MCF 10A (cell line): ENCODE measurements at regions of chr1 and their contacts with region 1.

Region 1: GRCh38 chr1:26450908-26451307 is 18.8 kb downstream of the DHDDS start:
- DNase-seq: no peak
- H3K4me3 Mint-ChIP-seq: no peak overlapping the region
- H3K27ac Mint-ChIP-seq: no peak overlapping the region
- H3K4me1 Mint-ChIP-seq: no peaks in the 10 kb centered on the region
- H3K27me3 Mint-ChIP-seq: no peaks in the 10 kb centered on the region
- CTCF ChIP-seq: no peak

Region 2: GRCh38 chr1:26259578-26259977 is 191.3 kb before region 1 on chr1:
- CTCF ChIA-PET with region 1: no interaction called
- POLR2A ChIA-PET with region 1: no interaction called
- intact Hi-C with region 1: no loop called
- DNase-seq: no peak
- H3K4me3 Mint-ChIP-seq: no peak overlapping the region
- H3K27ac Mint-ChIP-seq: no peak overlapping the region
- H3K4me1 Mint-ChIP-seq: no peaks in the 10 kb centered on the region
- H3K27me3 Mint-ChIP-seq: no peaks in the 10 kb centered on the region
- CTCF ChIP-seq: no peak

Region 3: DNA sequence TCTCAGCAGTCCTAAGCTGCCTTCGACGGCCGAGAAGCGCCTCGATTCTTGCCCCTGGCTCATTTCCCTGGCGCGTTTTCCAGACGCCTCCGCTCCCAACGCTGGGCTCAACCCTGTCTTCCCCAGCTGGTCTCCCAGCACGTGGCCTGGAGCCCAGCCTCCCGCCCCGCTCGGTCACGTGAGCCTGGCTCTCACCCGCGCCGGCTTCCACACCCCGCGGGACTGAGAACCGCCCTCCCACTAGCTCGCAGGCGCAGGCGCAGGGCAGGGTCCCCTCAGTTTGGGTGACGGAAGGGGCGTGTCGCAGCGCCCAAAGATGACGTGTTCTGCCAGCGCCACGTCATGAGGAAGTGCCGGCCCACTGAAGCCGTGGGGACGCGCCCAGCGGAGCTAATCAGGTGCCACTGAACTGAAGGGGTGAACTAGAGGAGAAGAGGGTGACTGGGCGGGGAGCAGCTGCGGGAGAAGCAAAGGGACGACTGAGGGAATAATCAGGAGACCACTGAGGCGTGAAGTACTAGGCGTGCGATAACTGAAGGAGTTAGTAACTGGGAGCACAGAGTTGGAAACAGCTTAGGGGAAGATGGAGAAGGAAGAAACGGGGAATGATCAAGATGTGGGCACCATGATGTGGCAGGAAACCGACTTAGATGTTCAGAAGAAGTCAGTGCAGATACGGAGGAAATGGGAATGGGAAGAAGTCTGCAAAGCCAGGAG is 18.8 kb before region 1 on chr1 and contains the start of gene DHDDS:
- CTCF ChIA-PET with region 1: interaction called, 7 read pairs
- POLR2A ChIA-PET with region 1: interaction called, 11 read pairs
- intact Hi-C with region 1: no loop called
- DNase-seq: peak; percentile 97
- H3K4me3 Mint-ChIP-seq: peak within 1 kb of the TSS; percentile 94
- H3K27ac Mint-ChIP-seq: peak within 1 kb of the TSS; percentile 88
- H3K4me1 Mint-ChIP-seq: peaks cover 12% of the 10 kb centered on the region
- H3K27me3 Mint-ChIP-seq: no peaks in the 10 kb centered on the region
- CTCF ChIP-seq: no peak
- total RNA-seq, gene DHDDS: 48.2 and 56.2 TPM in 2 replicates